CD8-positive, alpha-beta T cell (primary cell): ENCODE measurements at regions of chr11 and their contacts with region 1.

Region 1: DNA sequence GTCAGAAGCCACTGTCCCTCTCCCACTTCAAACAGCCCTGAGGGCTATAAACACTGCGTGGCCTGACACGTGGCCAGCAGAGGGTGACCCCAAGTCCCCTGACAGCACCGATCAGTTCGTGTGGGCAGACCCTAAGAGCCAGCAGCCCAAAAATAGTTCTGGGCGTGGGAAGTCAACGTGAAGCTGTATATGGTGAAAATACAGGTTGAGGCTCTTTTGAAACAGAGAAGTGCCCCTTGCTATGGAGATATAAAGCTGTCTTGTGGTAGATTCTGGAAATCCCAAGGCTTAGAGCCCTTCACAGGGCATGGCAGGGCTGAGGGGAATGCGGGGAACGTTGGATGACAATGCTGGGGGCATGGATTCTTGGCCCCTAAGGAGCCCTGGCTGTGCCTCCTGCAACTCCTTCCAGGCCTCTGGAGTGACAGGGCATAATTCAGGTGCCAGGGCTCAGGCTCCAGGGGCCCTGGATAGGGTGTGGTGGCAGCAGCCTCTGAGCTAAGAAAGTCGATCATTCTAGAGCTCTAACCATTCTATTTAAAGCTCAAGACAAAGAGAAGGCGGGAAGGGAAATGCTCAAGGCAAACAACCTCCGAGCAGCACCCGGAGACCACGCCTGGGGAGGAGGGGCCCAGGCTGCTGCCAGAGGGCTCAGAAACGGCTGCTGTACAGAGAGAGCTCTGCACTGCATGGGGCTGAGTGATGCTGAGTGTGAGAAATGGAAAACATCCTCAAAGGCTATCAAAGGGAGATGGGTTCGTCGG is 60.4 kb upstream of the CD5 start:
- DNase-seq: peak; percentile 63 to 94 (median 85)
- ATAC-seq: peak; percentile 98
- H3K4me3 ChIP-seq: peak overlapping the region; percentile 10 to 17
- H3K4me3 Mint-ChIP-seq: peak overlapping the region; percentile 75
- H3K27ac ChIP-seq: peak overlapping the region; percentile 60 to 91
- H3K27ac Mint-ChIP-seq: peak overlapping the region; percentile 98
- H3K4me1 ChIP-seq: peaks cover 46% of the 10 kb centered on the region
- H3K4me1 Mint-ChIP-seq: peaks cover 48% of the 10 kb centered on the region
- H3K27me3 ChIP-seq: no peaks in the 10 kb centered on the region
- H3K27me3 Mint-ChIP-seq: no peaks in the 10 kb centered on the region
- CTCF ChIP-seq: no peak

Region 2: DNA sequence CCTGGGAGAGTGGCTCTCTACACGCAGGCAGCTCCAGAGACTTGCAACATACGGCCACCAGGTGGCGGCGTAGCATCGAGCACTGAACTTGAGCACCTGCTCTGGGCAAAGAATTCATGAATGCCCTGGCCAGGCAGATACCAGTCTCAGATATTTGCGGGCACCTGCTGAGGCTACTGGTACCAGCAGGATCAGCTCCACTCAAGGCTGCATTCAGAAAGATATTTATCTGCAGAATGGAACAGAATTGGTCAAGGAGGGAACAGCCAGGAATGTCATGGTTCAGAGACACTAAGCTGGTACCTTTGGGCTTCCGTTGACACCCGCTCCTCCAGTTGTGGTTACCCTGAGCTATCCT is 210.8 kb before region 1 on chr11:
- CTCF ChIA-PET with region 1: no interaction called
- POLR2A ChIA-PET with region 1: no interaction called
- intact Hi-C with region 1: no loop called
- DNase-seq: peak; percentile 60 to 88 (median 83)
- ATAC-seq: peak; percentile 96
- H3K4me3 ChIP-seq: peak overlapping the region in 1 of 2 experiments; percentile 12
- H3K4me3 Mint-ChIP-seq: no peak overlapping the region
- H3K27ac ChIP-seq: no peak overlapping the region
- H3K27ac Mint-ChIP-seq: no peak overlapping the region
- H3K4me1 ChIP-seq: no peaks in the 10 kb centered on the region
- H3K4me1 Mint-ChIP-seq: no peaks in the 10 kb centered on the region
- H3K27me3 ChIP-seq: no peaks in the 10 kb centered on the region
- H3K27me3 Mint-ChIP-seq: peaks cover 6% of the 10 kb centered on the region
- CTCF ChIP-seq: peak; percentile 90

Region 3: DNA sequence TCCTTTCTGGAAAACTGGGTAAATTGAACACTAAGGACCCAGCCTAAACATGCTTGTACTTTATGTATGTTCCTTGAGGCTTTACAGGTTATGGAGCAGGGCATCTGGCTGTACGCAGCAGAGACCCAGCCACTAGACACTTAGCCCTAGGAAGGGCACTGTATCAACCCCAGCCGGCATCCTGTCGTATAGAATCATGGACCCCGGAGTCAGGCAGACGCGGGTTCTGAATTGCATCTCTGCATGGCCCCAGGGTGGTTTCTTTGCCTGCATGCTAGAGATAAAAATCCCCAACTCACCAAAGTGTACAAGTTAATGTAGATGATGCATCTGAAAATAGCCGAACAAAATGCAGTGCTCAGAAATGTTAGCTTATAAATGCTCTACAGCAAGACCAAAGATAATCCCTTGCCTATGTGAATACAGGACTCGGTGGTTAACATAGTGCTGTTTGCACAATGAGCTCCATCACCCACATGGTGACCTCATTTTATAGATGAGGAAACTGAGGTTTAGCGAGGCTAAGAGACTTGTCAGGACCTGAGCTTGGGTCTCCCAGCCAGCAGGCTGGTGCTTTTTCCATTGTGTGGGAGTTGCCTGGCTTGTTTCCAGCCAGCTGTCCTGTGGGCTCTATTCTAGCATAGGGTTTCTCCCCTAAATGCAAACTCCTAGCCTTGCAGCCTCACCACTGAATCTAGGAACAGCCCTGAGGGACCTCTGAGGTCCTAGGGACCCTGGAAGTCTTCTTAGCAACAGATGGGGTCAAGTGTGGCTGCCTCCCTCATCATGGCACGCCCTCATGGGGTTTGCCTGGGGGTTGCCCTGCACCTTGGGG is 63.2 kb before region 1 on chr11:
- CTCF ChIA-PET with region 1: interaction called, 8 read pairs
- POLR2A ChIA-PET with region 1: interaction called, 18 read pairs
- intact Hi-C with region 1: no loop called
- DNase-seq: peak in 4 of 9 experiments; percentile 48 to 85 (median 60)
- ATAC-seq: peak; percentile 37
- H3K4me3 ChIP-seq: peak overlapping the region; percentile 10 to 26
- H3K4me3 Mint-ChIP-seq: peak overlapping the region; percentile 61
- H3K27ac ChIP-seq: peak overlapping the region; percentile 7 to 85
- H3K27ac Mint-ChIP-seq: peak overlapping the region; percentile 85
- H3K4me1 ChIP-seq: peaks cover 87% of the 10 kb centered on the region
- H3K4me1 Mint-ChIP-seq: peaks cover 90% of the 10 kb centered on the region
- H3K27me3 ChIP-seq: no peaks in the 10 kb centered on the region
- H3K27me3 Mint-ChIP-seq: no peaks in the 10 kb centered on the region
- CTCF ChIP-seq: no peak

Region 4: DNA sequence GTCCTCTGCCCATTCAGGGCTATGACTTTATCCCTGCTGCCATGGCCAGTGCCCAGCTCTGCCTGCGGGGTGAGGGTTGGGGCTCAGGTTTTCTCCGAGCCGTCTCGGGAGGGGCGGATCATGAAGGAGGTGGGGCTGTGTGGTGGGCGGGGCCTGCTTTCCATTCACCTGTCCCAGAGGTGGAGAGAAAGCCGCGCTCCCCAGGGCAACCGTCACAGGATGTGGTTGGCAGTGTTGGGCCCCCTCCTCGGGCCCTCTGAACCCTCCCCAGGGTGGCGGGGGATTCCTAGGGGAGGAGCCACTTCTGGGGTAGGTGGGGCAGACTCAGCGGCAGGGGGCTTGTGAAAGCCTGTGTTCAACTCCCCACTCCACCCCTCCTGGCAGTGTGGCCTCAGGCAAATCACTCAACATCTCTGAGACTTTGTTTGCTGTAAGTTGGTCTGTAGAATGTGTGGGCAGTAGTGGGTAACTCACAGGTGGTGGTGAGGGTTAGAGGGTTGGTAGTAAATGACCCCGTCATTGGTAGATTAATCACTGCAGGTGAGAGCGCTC is 20.2 kb before region 1 on chr11:
- CTCF ChIA-PET with region 1: interaction called, 14 read pairs
- POLR2A ChIA-PET with region 1: interaction called, 54 read pairs
- intact Hi-C with region 1: loop called (anchors 1 kb)
- DNase-seq: peak; percentile 73 to 96 (median 89)
- ATAC-seq: peak; percentile 74
- H3K4me3 ChIP-seq: peak overlapping the region in 1 of 2 experiments; percentile 38
- H3K4me3 Mint-ChIP-seq: peak overlapping the region; percentile 61
- H3K27ac ChIP-seq: peak overlapping the region; percentile 41 to 84
- H3K27ac Mint-ChIP-seq: peak overlapping the region; percentile 95
- H3K4me1 ChIP-seq: peaks cover 60% of the 10 kb centered on the region
- H3K4me1 Mint-ChIP-seq: peaks cover 69% of the 10 kb centered on the region
- H3K27me3 ChIP-seq: no peaks in the 10 kb centered on the region
- H3K27me3 Mint-ChIP-seq: no peaks in the 10 kb centered on the region
- CTCF ChIP-seq: no peak

Region 5: DNA sequence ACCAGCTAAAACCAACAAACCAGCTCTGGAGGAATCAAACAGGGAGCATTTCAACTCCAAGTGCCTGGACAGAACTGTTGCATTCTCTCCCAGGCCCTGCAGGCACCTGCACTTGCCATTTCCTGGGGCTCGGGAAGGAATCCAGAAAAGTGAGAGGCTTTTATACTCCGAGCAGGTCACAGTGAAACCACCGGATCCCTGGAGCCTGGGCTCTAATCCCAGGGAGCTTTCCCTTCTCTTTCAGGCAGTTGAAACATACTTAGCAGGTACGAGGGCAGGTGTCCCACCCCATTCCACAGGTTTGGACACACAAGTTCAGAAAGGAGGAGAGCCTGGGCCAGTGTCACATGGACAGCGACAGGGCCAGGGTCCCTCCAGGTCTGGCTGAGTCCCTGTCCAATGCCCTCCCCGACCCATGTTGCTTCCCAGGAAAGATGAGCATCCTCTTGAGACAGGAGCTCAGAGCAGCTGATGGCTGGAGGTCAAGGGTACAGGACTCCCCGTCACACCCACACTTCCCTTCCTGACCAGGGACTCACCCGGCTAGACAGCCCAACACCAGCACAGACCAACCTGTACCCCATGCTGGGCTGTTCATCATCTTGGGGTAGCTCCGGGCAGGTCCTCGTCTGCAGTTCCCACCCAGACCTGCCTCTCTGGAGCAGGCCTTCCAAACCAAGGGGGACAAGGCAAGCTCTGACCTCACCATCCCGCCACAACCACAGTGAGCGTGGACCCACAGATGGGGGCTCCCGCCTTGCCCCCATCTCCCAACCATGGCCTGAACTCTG is 10.4 kb after region 1 on chr11:
- CTCF ChIA-PET with region 1: interaction called, 10 read pairs
- POLR2A ChIA-PET with region 1: interaction called, 12 read pairs
- intact Hi-C with region 1: no loop called
- DNase-seq: no peak
- ATAC-seq: no peak
- H3K4me3 ChIP-seq: no peak overlapping the region
- H3K4me3 Mint-ChIP-seq: no peak overlapping the region
- H3K27ac ChIP-seq: no peak overlapping the region
- H3K27ac Mint-ChIP-seq: no peak overlapping the region
- H3K4me1 ChIP-seq: peaks cover 27% of the 10 kb centered on the region
- H3K4me1 Mint-ChIP-seq: peaks cover 43% of the 10 kb centered on the region
- H3K27me3 ChIP-seq: no peaks in the 10 kb centered on the region
- H3K27me3 Mint-ChIP-seq: no peaks in the 10 kb centered on the region
- CTCF ChIP-seq: no peak

Region 6: GRCh38 chr11:61083601-61084147 is 41.7 kb after region 1 on chr11:
- CTCF ChIA-PET with region 1: interaction called, 5 read pairs
- POLR2A ChIA-PET with region 1: interaction called, 30 read pairs
- intact Hi-C with region 1: loop called in 1 of 2 experiments (anchors 5 kb)
- DNase-seq: peak in 7 of 9 experiments; percentile 38 to 91 (median 75)
- ATAC-seq: peak; percentile 66
- H3K4me3 ChIP-seq: peak overlapping the region in 1 of 2 experiments; percentile 9
- H3K4me3 Mint-ChIP-seq: peak overlapping the region; percentile 70
- H3K27ac ChIP-seq: peak overlapping the region; percentile 60 to 83
- H3K27ac Mint-ChIP-seq: peak overlapping the region; percentile 97
- H3K4me1 ChIP-seq: peaks cover 52% of the 10 kb centered on the region
- H3K4me1 Mint-ChIP-seq: peaks cover 53% of the 10 kb centered on the region
- H3K27me3 ChIP-seq: no peaks in the 10 kb centered on the region
- H3K27me3 Mint-ChIP-seq: no peaks in the 10 kb centered on the region
- CTCF ChIP-seq: no peak

Region 7: GRCh38 chr11:61129639-61130523 is 87.9 kb after region 1 on chr11:
- CTCF ChIA-PET with region 1: interaction called, 12 read pairs
- POLR2A ChIA-PET with region 1: no interaction called
- intact Hi-C with region 1: no loop called
- DNase-seq: peak; percentile 76 to 95 (median 91)
- ATAC-seq: peak; percentile 91
- H3K4me3 ChIP-seq: no peak overlapping the region
- H3K4me3 Mint-ChIP-seq: peak overlapping the region; percentile 46
- H3K27ac ChIP-seq: no peak overlapping the region
- H3K27ac Mint-ChIP-seq: peak overlapping the region; percentile 64
- H3K4me1 ChIP-seq: peaks cover 17% of the 10 kb centered on the region
- H3K4me1 Mint-ChIP-seq: peaks cover 21% of the 10 kb centered on the region
- H3K27me3 ChIP-seq: no peaks in the 10 kb centered on the region
- H3K27me3 Mint-ChIP-seq: no peaks in the 10 kb centered on the region
- CTCF ChIP-seq: peak; percentile 100

Region 8: GRCh38 chr11:61254403-61255025 is 212.6 kb after region 1 on chr11:
- CTCF ChIA-PET with region 1: no interaction called
- POLR2A ChIA-PET with region 1: no interaction called
- intact Hi-C with region 1: no loop called
- DNase-seq: peak; percentile 31 to 70 (median 58)
- ATAC-seq: peak; percentile 91
- H3K4me3 ChIP-seq: no peak overlapping the region
- H3K4me3 Mint-ChIP-seq: no peak overlapping the region
- H3K27ac ChIP-seq: no peak overlapping the region
- H3K27ac Mint-ChIP-seq: no peak overlapping the region
- H3K4me1 ChIP-seq: no peaks in the 10 kb centered on the region
- H3K4me1 Mint-ChIP-seq: no peaks in the 10 kb centered on the region
- H3K27me3 ChIP-seq: no peaks in the 10 kb centered on the region
- H3K27me3 Mint-ChIP-seq: no peaks in the 10 kb centered on the region
- CTCF ChIP-seq: peak; percentile 70

Region 9: GRCh38 chr11:61488651-61489291 is 446.8 kb after region 1 on chr11:
- CTCF ChIA-PET with region 1: no interaction called
- POLR2A ChIA-PET with region 1: no interaction called
- intact Hi-C with region 1: no loop called
- DNase-seq: no peak
- ATAC-seq: no peak
- H3K4me3 ChIP-seq: no peak overlapping the region
- H3K4me3 Mint-ChIP-seq: no peak overlapping the region
- H3K27ac ChIP-seq: no peak overlapping the region
- H3K27ac Mint-ChIP-seq: no peak overlapping the region
- H3K4me1 ChIP-seq: no peaks in the 10 kb centered on the region
- H3K4me1 Mint-ChIP-seq: no peaks in the 10 kb centered on the region
- H3K27me3 ChIP-seq: no peaks in the 10 kb centered on the region
- H3K27me3 Mint-ChIP-seq: no peaks in the 10 kb centered on the region
- CTCF ChIP-seq: no peak